Activated T-helper 2 cell treated with anti-CD3 and anti-CD28 coated beads, Interferon-gamma antibody, Interleukin-2, Interleukin-4, amounts not matched to agents 10 μg/mL and 5 μg/mL and 100 μg/mL, durations not matched to agents 14 hours and 24 hours and 36 hours (primary cell): ENCODE measurements at regions of chrX and their contacts with region 1.

Region 1: GRCh38 chrX:119791438-119792231 is at the start of gene RPL39:
- DNase-seq: peak; percentile 78
- H3K4me3 Mint-ChIP-seq: peak within 1 kb of the TSS; percentile 95
- H3K27ac Mint-ChIP-seq: peak within 1 kb of the TSS; percentile 92
- H3K4me1 Mint-ChIP-seq: peaks cover 8% of the 10 kb centered on the region
- H3K27me3 Mint-ChIP-seq: no peaks in the 10 kb centered on the region
- total RNA-seq, gene RPL39: 2,137 and 2,151 TPM in 2 replicates

Region 2: DNA sequence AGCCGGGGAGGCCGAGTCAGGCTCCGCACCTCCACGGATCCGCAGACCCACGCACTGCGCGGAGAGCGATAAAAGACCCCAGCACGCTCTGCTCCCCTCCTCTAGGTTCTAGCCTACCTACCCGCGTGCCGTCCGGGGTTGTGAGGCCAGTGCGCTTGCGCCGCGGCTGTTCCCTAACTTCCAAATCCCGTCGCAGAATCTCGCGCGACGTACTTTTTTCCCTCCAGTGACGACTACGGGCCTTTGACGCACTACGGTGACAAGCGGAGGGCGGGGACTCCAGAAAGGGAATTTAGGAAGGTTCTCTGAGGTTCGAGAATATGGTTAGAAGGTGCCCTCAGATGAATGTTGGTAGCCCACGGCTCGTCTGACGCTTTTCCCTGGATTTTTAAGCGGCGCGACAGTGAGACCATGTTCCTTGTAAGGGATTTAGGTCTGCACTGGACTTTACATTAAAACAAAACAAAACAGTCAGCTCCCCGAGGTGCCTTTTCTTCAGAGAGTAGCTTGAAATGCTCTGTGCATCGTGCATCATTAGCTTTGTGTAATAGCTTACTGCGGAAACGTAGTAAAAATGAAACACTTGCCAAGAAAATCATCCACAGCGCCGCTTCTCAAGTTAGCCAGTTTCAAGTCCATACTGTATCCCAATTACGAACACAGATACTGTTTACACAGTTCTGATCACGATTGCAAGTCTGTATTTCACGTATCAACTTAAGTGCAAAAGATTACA is 185.2 kb before region 1 on chrX and contains the start of gene NKRF:
- intact Hi-C with region 1: loop called (anchors 2 kb)
- DNase-seq: peak; percentile 86
- H3K4me3 Mint-ChIP-seq: peak within 1 kb of the TSS; percentile 97
- H3K27ac Mint-ChIP-seq: peak within 1 kb of the TSS; percentile 96
- H3K4me1 Mint-ChIP-seq: peaks cover 20% of the 10 kb centered on the region
- H3K27me3 Mint-ChIP-seq: no peaks in the 10 kb centered on the region
- total RNA-seq, gene NKRF: 25.1 and 25.9 TPM in 2 replicates

Region 3: GRCh38 chrX:119753571-119754257 is 37.9 kb before region 1 on chrX:
- intact Hi-C with region 1: loop called (anchors 2 kb)
- DNase-seq: peak; percentile 53
- H3K4me3 Mint-ChIP-seq: no peak overlapping the region
- H3K27ac Mint-ChIP-seq: peak overlapping the region; percentile 83
- H3K4me1 Mint-ChIP-seq: peaks cover 38% of the 10 kb centered on the region
- H3K27me3 Mint-ChIP-seq: no peaks in the 10 kb centered on the region

Region 4: GRCh38 chrX:119826399-119826959 is 34.8 kb after region 1 on chrX:
- intact Hi-C with region 1: loop called (anchors 5 kb)
- DNase-seq: no peak
- H3K4me3 Mint-ChIP-seq: no peak overlapping the region
- H3K27ac Mint-ChIP-seq: no peak overlapping the region
- H3K4me1 Mint-ChIP-seq: peaks cover 11% of the 10 kb centered on the region
- H3K27me3 Mint-ChIP-seq: no peaks in the 10 kb centered on the region

Region 5: GRCh38 chrX:119852382-119853353 is 61.0 kb after region 1 on chrX and contains the start of gene UPF3B:
- intact Hi-C with region 1: loop called (anchors 1 kb)
- DNase-seq: peak; percentile 92
- H3K4me3 Mint-ChIP-seq: peak within 1 kb of the TSS; percentile 96
- H3K27ac Mint-ChIP-seq: peak within 1 kb of the TSS; percentile 95
- H3K4me1 Mint-ChIP-seq: peaks cover 4% of the 10 kb centered on the region
- H3K27me3 Mint-ChIP-seq: no peaks in the 10 kb centered on the region
- total RNA-seq, gene UPF3B: 13.9 TPM in 2 replicates

Region 6: GRCh38 chrX:119871599-119872395 is 80.2 kb after region 1 on chrX and contains the starts of genes NDUFA1 and RNF113A:
- intact Hi-C with region 1: loop called (anchors 1 kb)
- DNase-seq: peak; percentile 84
- H3K4me3 Mint-ChIP-seq: peak within 1 kb of the TSS; percentile 96
- H3K27ac Mint-ChIP-seq: peak within 1 kb of the TSS; percentile 99
- H3K4me1 Mint-ChIP-seq: peaks cover 5% of the 10 kb centered on the region
- H3K27me3 Mint-ChIP-seq: no peaks in the 10 kb centered on the region
- total RNA-seq, gene NDUFA1: 82.6 and 84.4 TPM in 2 replicates
- total RNA-seq, gene RNF113A: 24.0 and 26.8 TPM in 2 replicates